Activated T-helper 1 cell treated with anti-CD3 and anti-CD28 coated beads, Interleukin-12 subunit alpha, Interleukin-12 subunit beta, Interleukin-2, Interleukin-4 antibody, amounts not matched to agents 30 ng/mL and 10 ng/mL and 1 ng/mL, durations not matched to agents 14 hours and 24 hours and 36 hours (primary cell): ENCODE measurements at regions of chr11 and their contacts with region 1.

Region 1: DNA sequence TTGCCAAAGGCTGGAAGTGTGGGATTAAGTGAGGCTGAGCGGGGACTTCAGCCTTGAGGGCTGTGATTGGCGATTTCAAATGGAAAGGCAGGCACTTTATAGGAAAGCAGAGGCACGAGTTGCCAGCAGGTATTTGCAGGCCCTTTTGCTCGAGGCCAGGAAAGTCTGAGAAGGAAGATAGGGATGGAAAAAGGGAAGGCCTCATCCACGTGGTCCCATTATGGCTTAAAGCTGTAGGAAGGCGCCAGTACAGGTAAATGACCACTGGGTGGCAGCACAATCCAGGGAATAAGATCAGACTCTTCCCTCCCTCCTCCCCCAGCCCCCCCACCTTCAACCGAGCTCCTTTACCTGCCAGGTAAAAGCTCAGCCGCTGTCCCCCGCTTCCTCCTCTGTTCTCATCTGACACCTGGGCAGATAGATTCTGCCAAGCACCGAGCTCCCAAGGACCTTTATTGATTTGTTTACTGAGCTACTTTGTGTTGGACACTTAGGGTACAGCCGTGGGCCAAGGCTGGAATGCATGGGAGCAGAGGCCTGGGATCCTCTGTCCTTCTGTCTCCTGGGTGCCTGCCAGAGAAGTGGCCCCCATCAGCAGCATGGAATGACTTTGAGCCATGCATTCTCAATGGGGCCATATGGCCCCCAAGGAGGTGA is 7.5 kb downstream of the P2RX3 start:
- DNase-seq: peak; percentile 33
- H3K4me3 Mint-ChIP-seq: no peak overlapping the region
- H3K27ac Mint-ChIP-seq: no peak overlapping the region
- H3K4me1 Mint-ChIP-seq: peaks cover 13% of the 10 kb centered on the region
- H3K27me3 Mint-ChIP-seq: peaks cover 8% of the 10 kb centered on the region

Region 2: DNA sequence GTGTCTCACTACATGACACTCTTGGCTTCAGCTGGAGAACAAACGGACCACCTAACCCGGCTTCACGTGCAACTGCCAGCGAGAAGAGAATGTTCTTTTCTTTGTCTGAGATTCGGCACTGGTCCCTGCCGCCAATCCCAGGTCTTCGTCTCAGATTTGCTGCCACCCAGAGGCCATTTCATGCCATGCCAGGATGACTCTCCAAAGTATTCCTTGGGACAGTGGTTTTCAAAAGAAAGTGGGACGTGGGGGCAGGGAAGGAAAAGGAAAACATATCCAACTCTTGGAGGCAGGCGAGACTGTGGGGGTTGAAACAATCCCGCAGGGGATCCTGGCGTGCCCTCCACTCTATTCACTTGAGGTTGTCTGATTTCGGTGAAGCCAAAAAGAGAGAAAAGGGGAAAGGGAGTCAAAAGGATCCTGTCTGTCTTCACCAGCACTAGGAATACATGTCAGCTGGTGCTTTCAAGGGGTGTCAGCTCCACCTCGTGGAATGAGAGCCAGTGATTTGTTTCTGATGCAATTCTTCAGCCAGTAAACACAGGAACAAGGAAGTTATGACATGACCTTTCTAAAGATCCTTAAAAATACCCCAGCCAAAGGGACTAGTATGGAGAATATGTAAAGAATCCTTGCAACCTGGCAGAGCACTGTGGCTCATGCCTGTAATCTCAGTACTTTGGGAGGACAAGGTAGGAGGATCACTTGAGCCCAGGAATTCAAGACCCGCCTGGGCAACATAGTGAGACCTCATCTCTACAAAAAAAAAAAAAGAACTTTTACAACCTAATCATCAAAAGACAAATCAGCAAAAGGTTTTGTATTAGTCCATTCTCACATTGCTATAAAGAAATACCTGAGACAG is 67.6 kb before region 1 on chr11:
- intact Hi-C with region 1: no loop called
- DNase-seq: no peak
- H3K4me3 Mint-ChIP-seq: no peak overlapping the region
- H3K27ac Mint-ChIP-seq: no peak overlapping the region
- H3K4me1 Mint-ChIP-seq: peaks cover 4% of the 10 kb centered on the region
- H3K27me3 Mint-ChIP-seq: peaks cover 7% of the 10 kb centered on the region

Region 3: DNA sequence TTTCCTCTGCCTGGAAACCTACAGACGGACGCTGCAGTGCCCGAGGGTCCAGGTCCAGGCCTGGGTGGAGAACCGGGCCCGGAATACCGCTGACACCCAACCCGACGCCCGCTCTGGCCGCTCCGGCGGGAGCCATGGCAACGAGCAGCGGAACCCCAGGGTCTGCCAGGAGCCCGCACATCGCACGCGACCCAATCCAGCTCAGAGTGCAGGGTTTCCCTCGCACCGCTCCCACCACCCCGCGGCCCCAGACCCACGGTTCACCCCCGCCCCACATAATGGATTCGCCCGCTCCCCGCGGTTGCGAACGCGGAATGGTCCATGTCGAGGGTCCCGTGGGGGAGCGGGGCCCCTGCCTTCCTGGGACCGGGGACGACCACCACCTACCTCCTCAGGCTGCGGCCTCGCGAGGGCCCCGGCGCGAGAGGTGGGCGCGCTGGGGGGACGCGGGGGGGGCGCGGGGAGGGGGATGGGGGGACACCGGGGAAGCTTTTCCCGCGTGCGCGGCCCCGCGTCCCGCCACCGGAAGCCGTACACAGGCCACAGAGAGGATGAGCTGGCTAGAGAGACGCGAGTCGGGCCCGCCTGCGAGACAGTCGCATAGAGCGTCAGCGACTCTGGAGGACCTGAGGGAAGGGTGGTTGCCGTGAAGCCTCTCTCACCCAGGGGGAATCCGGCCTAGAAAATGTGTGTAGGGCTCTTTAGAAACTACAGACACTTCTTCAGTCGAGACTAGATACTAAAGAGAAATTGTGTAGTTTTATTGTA is 10.2 kb before region 1 on chr11 and contains the start of gene SSRP1:
- intact Hi-C with region 1: loop called (anchors 1 kb)
- DNase-seq: peak; percentile 81
- H3K4me3 Mint-ChIP-seq: peak within 1 kb of the TSS; percentile 92
- H3K27ac Mint-ChIP-seq: peak within 1 kb of the TSS; percentile 99
- H3K4me1 Mint-ChIP-seq: peaks cover 39% of the 10 kb centered on the region
- H3K27me3 Mint-ChIP-seq: peaks cover 1% of the 10 kb centered on the region
- total RNA-seq, gene SSRP1: 235 and 239 TPM in 2 replicates

Region 4: GRCh38 chr11:57456960-57457642 is 111.4 kb after region 1 on chr11:
- intact Hi-C with region 1: loop called (anchors 1 kb)
- DNase-seq: peak; percentile 65
- H3K4me3 Mint-ChIP-seq: peak overlapping the region; percentile 72
- H3K27ac Mint-ChIP-seq: no peak overlapping the region
- H3K4me1 Mint-ChIP-seq: peaks cover 36% of the 10 kb centered on the region
- H3K27me3 Mint-ChIP-seq: peaks cover 53% of the 10 kb centered on the region

Region 5: GRCh38 chr11:57480409-57481137 is 134.9 kb after region 1 on chr11:
- intact Hi-C with region 1: loop called (anchors 1 kb)
- DNase-seq: peak; percentile 62
- H3K4me3 Mint-ChIP-seq: no peak overlapping the region
- H3K27ac Mint-ChIP-seq: no peak overlapping the region
- H3K4me1 Mint-ChIP-seq: peaks cover 12% of the 10 kb centered on the region
- H3K27me3 Mint-ChIP-seq: peaks cover 49% of the 10 kb centered on the region

Region 6: GRCh38 chr11:57644748-57645688 is 299.3 kb after region 1 on chr11:
- intact Hi-C with region 1: loop called (anchors 1 kb)
- DNase-seq: peak; percentile 77
- H3K4me3 Mint-ChIP-seq: no peak overlapping the region
- H3K27ac Mint-ChIP-seq: no peak overlapping the region
- H3K4me1 Mint-ChIP-seq: peaks cover 48% of the 10 kb centered on the region
- H3K27me3 Mint-ChIP-seq: peaks cover 39% of the 10 kb centered on the region

Region 7: GRCh38 chr11:58286249-58286648 is 940.6 kb after region 1 on chr11:
- intact Hi-C with region 1: loop called (anchors 5 kb)
- DNase-seq: no peak
- H3K4me3 Mint-ChIP-seq: no peak overlapping the region
- H3K27ac Mint-ChIP-seq: no peak overlapping the region
- H3K4me1 Mint-ChIP-seq: no peaks in the 10 kb centered on the region
- H3K27me3 Mint-ChIP-seq: peaks cover 4% of the 10 kb centered on the region